ENCODE measurements at regions of chr13 and their contacts with region 1.

Region 1: DNA sequence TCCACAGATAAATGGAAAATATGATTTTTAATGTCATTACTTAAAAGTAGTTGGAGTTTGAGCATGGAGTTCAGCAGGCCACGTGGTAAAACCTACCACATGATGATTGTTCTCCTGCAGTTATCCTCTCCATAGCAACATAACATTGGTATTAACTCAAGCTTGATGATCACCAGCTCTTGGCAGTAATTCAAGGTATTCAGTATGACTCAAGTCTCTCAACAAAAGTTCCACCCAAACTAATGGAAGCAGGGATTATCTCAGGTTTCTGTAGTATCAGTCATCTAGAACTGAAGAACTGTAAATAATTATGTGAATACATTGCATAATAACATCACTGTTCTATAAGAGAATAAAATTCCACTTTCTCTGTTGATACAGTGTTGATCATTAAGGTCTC is 1092.5 kb downstream of the EFNB2 start:
- DNase-seq: no peak
- H3K4me3 ChIP-seq: no peak overlapping the region
- H3K27ac ChIP-seq: peak overlapping the region; percentile 42 to 63 (median 56)
- H3K4me1 ChIP-seq: peaks cover 6 to 30% (median 25%) of the 10 kb centered on the region in 4 donors
- H3K27me3 ChIP-seq: no peaks in the 10 kb centered on the region
- CTCF ChIP-seq: no peak
- EP300 ChIP-seq: no peak
- POLR2A ChIP-seq: no peak

Region 2: GRCh38 chr13:105334211-105334610 is 108.7 kb before region 1 on chr13:
- intact Hi-C with region 1: loop called (anchors 10 kb)
- DNase-seq: no peak
- H3K4me3 ChIP-seq: no peak overlapping the region
- H3K27ac ChIP-seq: peak overlapping the region in 1 of 4 donors; percentile 13
- H3K4me1 ChIP-seq: peaks cover 0 to 20% (median 15%) of the 10 kb centered on the region in 4 donors
- H3K27me3 ChIP-seq: no peaks in the 10 kb centered on the region
- CTCF ChIP-seq: no peak
- EP300 ChIP-seq: no peak
- POLR2A ChIP-seq: no peak